WTC11 (cell line): ENCODE measurements at regions of chr12 and their contacts with region 1.

Region 1: DNA sequence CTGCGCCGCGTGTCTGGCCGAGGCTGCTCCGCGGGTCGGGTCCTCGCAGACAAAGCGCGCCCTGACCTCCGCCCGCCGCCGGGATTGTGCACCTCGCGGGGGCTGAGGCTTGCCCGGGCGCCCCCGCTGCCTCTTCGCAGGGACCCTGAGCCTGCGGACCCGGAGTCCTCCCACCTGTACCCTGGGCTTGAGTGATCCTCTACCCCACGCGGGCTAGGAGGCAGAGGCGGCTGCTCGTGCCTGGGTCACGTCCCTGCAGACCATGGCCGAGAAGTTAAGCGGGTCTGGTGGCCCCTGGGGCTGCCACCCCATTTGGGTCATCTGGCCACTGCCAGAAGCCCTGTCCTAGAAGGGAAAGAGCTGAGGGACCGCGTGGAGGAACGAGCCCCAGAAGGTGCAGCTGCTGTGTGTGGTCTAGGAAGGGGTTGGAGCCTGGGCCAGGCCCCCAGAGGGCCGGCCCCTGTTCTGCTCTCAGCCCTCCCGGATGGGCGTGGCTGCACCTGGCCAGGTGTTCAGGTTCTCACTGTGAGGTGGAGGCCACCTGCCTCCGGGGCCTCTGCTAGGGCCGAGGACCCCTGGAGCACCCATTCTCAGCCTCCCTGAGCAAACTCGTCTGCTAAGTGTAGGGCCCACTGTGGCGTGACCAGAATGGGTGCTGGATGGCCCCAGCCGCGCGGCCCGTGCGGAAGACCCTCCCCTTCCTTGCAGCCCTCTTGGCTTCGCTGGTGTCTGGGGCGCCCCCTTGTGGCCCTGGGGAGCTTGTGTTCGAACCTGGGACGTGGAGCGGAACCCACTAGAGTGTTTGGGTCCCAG is 49.6 kb downstream of the LRCOL1 start:
- DNase-seq: peak; percentile 91
- ATAC-seq: peak; percentile 75
- H3K4me3 Mint-ChIP-seq: peak overlapping the region; percentile 79
- H3K27ac Mint-ChIP-seq: no peak overlapping the region
- H3K4me1 Mint-ChIP-seq: peaks cover 2% of the 10 kb centered on the region; the same call in 1 of the 2 replicates
- H3K27me3 Mint-ChIP-seq: peaks cover 35% of the 10 kb centered on the region
- CTCF ChIP-seq: peak; percentile 91

Region 2: GRCh38 chr12:132429946-132430643 is 130.7 kb before region 1 on chr12:
- CTCF ChIA-PET with region 1: interaction called, 14 read pairs
- POLR2A ChIA-PET with region 1: no interaction called
- DNase-seq: peak; percentile 66
- ATAC-seq: peak; percentile 53
- H3K4me3 Mint-ChIP-seq: peak overlapping the region; percentile 45
- H3K27ac Mint-ChIP-seq: no peak overlapping the region
- H3K4me1 Mint-ChIP-seq: peaks cover 28% of the 10 kb centered on the region
- H3K27me3 Mint-ChIP-seq: peaks cover 80% of the 10 kb centered on the region
- CTCF ChIP-seq: no peak

Region 3: DNA sequence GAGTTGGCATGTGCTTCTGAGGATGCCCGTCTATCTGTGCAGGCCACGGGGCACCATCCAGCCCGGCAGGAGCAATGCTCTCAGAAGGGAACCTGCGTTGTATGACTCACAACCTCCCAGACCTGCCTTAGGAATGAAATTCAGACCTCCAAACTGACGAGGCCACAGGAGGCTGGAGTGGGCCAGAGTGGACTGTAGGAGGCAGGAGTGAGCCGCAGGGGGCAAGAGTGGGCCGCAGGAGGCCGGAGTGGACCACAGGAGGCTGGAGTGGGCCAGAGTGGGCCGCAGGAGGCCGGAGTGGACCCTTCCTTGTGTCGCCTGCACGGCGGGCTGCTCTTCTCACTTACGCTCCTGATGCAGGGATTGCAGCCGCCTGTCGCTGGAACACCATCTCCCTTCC is 82.0 kb before region 1 on chr12:
- CTCF ChIA-PET with region 1: no interaction called
- POLR2A ChIA-PET with region 1: no interaction called
- DNase-seq: no peak
- ATAC-seq: no peak
- H3K4me3 Mint-ChIP-seq: no peak overlapping the region
- H3K27ac Mint-ChIP-seq: no peak overlapping the region
- H3K4me1 Mint-ChIP-seq: no peaks in the 10 kb centered on the region
- H3K27me3 Mint-ChIP-seq: peaks cover 73% of the 10 kb centered on the region
- CTCF ChIP-seq: no peak

Region 4: DNA sequence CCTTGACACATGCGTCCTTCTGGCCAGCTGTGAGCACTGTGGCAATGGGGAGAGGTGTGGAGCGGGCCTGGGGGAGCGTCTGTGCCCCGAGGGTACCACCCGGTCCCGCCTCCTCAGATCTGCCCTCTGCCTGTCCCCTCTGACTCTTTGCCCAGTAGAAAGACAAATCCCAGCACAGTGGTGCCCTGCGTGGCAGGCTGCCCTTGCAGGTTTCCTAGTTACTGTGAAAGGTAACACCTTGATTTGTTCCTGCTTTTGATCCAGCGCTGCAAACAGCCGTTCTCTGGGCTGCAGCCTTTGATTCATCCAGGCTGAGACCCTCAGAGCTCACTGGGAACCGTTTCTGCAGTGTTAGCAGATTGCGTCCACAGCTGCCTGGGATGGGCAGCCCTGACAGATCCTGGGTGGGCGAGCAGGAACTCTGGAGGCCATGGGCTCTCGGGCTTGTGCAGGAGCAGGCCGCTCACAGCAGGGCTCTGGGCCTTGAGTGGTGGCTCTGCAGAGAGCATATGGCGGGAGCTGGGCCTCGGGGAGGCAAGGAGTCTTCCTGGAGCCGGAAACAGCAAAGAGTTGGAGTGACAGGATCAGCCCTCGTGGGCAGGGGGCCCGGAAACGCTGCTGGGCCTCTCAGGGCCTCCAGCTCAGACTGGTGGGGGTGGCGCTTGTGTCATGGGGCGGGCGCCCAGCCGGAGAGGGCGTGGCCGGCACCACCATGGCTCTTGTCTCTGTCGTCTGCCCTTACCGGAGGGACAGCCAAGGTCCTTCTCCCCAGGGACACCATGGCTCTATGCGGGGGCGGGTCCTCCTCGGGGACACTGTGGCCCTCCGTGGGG is 54.3 kb before region 1 on chr12:
- CTCF ChIA-PET with region 1: interaction called, 12 read pairs
- POLR2A ChIA-PET with region 1: no interaction called
- DNase-seq: no peak
- ATAC-seq: no peak
- H3K4me3 Mint-ChIP-seq: no peak overlapping the region
- H3K27ac Mint-ChIP-seq: peak overlapping the region; percentile 34; the same call in 1 of the 2 replicates
- H3K4me1 Mint-ChIP-seq: peaks cover 24% of the 10 kb centered on the region
- H3K27me3 Mint-ChIP-seq: no peaks in the 10 kb centered on the region
- CTCF ChIP-seq: no peak

Region 5: DNA sequence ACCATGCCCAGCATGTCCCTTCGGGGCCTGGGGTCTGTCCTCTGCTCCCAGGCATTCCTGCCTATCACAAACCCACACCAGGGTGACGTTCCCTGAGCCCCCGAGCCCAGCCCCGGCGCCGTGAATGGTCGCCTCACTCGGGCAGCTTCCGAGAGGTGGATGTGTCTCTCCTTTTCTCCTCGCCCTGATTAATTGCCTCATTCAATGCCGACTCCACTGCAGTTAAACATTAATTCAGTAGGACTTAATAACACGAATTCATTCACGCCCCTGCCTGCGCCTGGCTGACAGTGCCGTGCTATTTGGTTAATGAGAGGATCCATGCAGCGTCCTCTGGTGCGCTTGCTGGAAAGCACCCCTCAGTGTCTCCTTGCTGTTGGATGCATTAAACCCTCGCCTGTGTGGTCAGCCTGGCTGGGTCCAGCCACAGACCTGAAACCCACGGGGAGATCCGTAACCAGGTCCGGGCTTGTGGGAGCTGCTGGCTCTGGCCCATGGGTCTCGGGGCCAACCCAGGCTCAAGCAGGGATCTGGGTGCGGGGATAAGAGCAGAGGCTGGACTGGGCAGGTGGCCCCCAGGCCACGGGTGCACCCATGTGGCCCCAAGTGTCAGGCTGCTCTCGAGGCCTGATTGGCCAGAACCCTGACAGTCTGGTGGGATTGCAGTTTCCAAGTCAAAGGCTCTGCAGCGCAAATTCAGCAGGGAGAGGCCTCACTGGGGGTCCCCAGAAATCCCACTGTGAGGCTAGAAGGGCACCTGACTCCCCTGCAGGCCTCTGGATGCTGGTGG is 15.5 kb before region 1 on chr12:
- CTCF ChIA-PET with region 1: interaction called, 16 read pairs
- POLR2A ChIA-PET with region 1: interaction called, 5 read pairs
- DNase-seq: no peak
- ATAC-seq: no peak
- H3K4me3 Mint-ChIP-seq: no peak overlapping the region
- H3K27ac Mint-ChIP-seq: no peak overlapping the region
- H3K4me1 Mint-ChIP-seq: peaks cover under 1% of the 10 kb centered on the region; the same call in 1 of the 2 replicates
- H3K27me3 Mint-ChIP-seq: peaks cover 80% of the 10 kb centered on the region
- CTCF ChIP-seq: no peak

Region 6: DNA sequence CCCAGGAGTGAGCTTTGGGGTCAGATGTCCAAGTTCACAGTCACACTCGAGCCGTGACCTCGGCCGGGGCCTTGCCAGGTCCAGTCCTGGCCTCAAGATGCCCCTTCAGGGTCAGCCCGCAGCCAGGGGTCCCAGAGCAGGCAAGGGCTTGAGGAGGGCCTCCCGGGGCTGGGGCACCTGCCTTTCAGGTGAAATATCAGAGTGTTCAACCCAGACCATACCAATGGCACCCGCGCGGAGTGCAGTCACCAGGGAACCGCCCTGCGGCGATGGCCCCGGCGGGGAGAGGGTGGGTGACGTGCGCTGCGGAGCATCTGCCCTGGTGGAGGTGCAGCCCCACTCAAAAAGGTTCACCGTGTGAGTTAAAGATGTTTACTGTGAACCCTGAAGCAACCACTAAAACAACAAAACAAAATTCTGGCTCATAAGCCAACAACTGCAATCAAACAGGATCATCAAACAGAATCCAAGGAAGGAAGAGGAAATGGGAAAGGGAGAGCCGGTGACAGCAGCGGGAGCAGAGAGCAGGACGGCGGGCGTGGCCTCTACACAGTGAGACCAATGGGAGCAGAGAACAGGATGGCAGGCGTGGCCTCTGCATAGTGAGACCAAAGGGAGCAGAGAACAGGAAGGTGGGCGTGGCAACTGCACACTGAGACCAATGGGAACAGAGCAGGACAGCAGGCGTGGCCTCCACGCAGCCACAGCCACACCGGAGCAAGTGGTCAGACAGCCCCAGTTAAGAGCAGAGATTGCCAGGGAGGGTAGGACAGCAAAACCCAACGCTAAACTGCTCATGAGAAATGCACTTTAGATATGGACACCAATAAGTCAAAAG is 32.9 kb after region 1 on chr12:
- CTCF ChIA-PET with region 1: interaction called, 11 read pairs
- POLR2A ChIA-PET with region 1: no interaction called
- DNase-seq: peak; percentile 90
- ATAC-seq: peak; percentile 89
- H3K4me3 Mint-ChIP-seq: no peak overlapping the region
- H3K27ac Mint-ChIP-seq: no peak overlapping the region
- H3K4me1 Mint-ChIP-seq: peaks cover 6% of the 10 kb centered on the region; the same call in 1 of the 2 replicates
- H3K27me3 Mint-ChIP-seq: peaks cover 91% of the 10 kb centered on the region
- CTCF ChIP-seq: no peak

Region 7: DNA sequence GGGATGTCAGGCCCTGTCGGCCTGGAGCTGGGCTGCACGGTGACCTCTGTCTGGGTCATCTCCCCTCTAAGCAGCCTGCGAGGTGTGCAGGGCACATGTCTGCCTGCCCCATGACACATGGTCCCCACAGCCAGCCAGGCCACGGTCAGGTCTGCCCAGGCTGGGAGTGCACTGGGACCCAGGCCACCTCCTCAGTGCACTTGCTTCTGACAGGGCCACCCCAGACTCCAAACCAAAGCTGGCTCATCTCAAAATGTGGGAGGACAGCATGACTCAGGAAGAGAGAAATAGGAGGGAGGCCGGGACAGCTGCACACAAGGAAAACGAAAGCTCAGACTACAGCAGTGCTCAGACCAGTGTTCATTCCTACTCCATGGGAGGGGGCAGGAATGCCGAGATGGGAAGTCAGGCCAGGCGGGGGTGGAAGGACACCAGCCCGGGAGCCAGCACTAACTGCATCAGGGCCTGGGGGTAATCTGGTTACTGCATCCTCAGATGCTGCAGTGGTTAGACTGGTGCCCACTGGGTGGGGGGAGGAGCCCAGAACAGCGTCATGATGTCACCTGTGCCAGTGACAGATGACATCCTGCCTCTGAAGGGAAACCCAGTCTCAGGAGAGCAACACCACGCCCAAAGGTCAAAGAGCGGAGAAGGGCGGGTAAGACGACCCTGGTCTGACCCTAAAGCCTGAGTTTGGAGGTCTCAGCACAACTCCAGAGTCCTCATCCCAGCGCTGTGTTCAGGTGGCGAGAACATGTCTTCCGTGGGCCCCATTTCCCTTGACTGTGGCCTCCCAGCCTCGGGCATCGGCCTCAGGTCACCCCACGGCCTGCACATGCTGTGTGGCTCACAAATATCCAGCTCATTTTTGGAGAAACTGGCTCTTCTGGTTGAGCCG is 61.9 kb after region 1 on chr12:
- CTCF ChIA-PET with region 1: interaction called, 18 read pairs
- POLR2A ChIA-PET with region 1: no interaction called
- DNase-seq: no peak
- ATAC-seq: no peak
- H3K4me3 Mint-ChIP-seq: no peak overlapping the region
- H3K27ac Mint-ChIP-seq: peak overlapping the region; percentile 79
- H3K4me1 Mint-ChIP-seq: peaks cover 4% of the 10 kb centered on the region
- H3K27me3 Mint-ChIP-seq: peaks cover 16% of the 10 kb centered on the region
- CTCF ChIP-seq: no peak

Region 8: GRCh38 chr12:132887513-132888351 is 326.9 kb after region 1 on chr12 and contains the start of gene CHFR:
- CTCF ChIA-PET with region 1: no interaction called
- POLR2A ChIA-PET with region 1: no interaction called
- DNase-seq: peak; percentile 96
- ATAC-seq: peak; percentile 94
- H3K4me3 Mint-ChIP-seq: peak within 1 kb of the TSS; percentile 97
- H3K27ac Mint-ChIP-seq: peak within 1 kb of the TSS; percentile 100
- H3K4me1 Mint-ChIP-seq: peaks cover 36% of the 10 kb centered on the region
- H3K27me3 Mint-ChIP-seq: peaks cover 9% of the 10 kb centered on the region
- CTCF ChIP-seq: no peak
- total RNA-seq, gene CHFR: 50.2 to 58.7 TPM (median 53.9 TPM) in 3 replicates